ENCODE measurements at regions of chr1 and their contacts with region 1.

Region 1: GRCh38 chr1:178055779-178056471 is 38.0 kb upstream of the RASAL2 start:
- DNase-seq: no peak
- H3K4me3 ChIP-seq: no peak overlapping the region
- H3K27ac ChIP-seq: peak overlapping the region; percentile 56
- H3K4me1 ChIP-seq: peaks cover 49% of the 10 kb centered on the region
- H3K27me3 ChIP-seq: no peaks in the 10 kb centered on the region
- CTCF ChIP-seq: no peak
- POLR2A ChIP-seq: no peak

Region 2: DNA sequence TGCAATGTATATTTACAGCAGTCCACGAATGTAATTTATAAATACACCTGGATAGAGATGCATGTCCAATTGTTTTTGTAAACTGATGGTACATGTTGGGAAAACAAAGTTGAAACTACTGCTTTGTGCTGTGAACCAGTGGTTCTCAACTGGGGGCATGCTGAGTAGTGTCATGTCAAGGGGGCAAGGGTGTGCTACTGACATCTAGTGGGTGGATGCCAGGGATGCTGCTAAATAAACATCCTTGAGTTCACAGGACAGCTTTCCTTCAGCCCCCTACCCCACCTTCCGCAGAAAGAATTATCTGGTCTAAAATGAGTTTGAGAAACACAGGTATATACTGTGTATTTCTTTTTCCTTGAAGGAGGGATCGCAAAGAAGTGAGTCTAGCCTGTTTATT is 133.9 kb after region 1 on chr1:
- intact Hi-C with region 1: loop called (anchors 10 kb)
- DNase-seq: no peak
- H3K4me3 ChIP-seq: no peak overlapping the region
- H3K27ac ChIP-seq: no peak overlapping the region
- H3K4me1 ChIP-seq: no peaks in the 10 kb centered on the region
- H3K27me3 ChIP-seq: no peaks in the 10 kb centered on the region
- CTCF ChIP-seq: no peak
- POLR2A ChIP-seq: no peak